Activated naive CD4-positive, alpha-beta T cell treated with anti-CD3 and anti-CD28 coated beads for 36 hours (primary cell): ENCODE measurements at regions of chr4 and their contacts with region 1.

Region 1: GRCh38 chr4:7101692-7102515 is 34.0 kb upstream of the GRPEL1 start:
- DNase-seq: peak; percentile 79
- H3K4me3 Mint-ChIP-seq: peak overlapping the region; percentile 90
- H3K27ac Mint-ChIP-seq: no peak overlapping the region
- H3K4me1 Mint-ChIP-seq: peaks cover 8% of the 10 kb centered on the region
- H3K27me3 Mint-ChIP-seq: no peaks in the 10 kb centered on the region

Region 2: GRCh38 chr4:6925357-6925836 is 176.5 kb before region 1 on chr4:
- CTCF ChIA-PET with region 1: no interaction called
- intact Hi-C with region 1: no loop called
- DNase-seq: peak; percentile 32
- H3K4me3 Mint-ChIP-seq: no peak overlapping the region
- H3K27ac Mint-ChIP-seq: peak overlapping the region; percentile 85
- H3K4me1 Mint-ChIP-seq: peaks cover 72% of the 10 kb centered on the region
- H3K27me3 Mint-ChIP-seq: no peaks in the 10 kb centered on the region

Region 3: GRCh38 chr4:7081891-7082471 is 19.9 kb before region 1 on chr4:
- CTCF ChIA-PET with region 1: interaction called, 13 read pairs
- intact Hi-C with region 1: no loop called
- DNase-seq: peak; percentile 69
- H3K4me3 Mint-ChIP-seq: no peak overlapping the region
- H3K27ac Mint-ChIP-seq: no peak overlapping the region
- H3K4me1 Mint-ChIP-seq: no peaks in the 10 kb centered on the region
- H3K27me3 Mint-ChIP-seq: peaks cover 18% of the 10 kb centered on the region

Region 4: DNA sequence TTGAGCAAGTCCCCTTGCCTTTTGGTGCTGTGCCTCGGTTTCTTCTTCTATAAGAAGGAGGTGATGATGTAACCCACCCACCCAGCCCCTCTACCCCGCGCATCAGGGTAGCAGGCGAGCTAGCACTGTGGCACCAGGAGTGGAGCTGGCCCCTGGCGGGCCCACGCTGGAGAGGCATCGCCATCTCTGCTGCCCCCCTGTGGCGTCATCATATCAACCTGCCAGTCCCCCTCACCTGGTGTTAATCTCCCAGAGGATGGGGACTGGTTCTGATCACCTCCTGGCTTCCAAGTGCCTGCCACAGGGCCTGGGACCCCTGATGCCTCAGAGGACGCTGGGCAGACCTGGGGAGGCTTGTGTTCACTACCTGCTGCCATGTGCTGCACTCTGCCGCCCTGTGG is 84.2 kb after region 1 on chr4:
- CTCF ChIA-PET with region 1: no interaction called
- intact Hi-C with region 1: loop called (anchors 2 kb)
- DNase-seq: peak; percentile 38
- H3K4me3 Mint-ChIP-seq: no peak overlapping the region
- H3K27ac Mint-ChIP-seq: no peak overlapping the region
- H3K4me1 Mint-ChIP-seq: peaks cover 7% of the 10 kb centered on the region
- H3K27me3 Mint-ChIP-seq: peaks cover 14% of the 10 kb centered on the region